ENCODE measurements at regions of chr15 and their contacts with region 1.

Region 1: GRCh38 chr15:70466895-70467529 is 296.3 kb downstream of the UACA start:
- DNase-seq: peak; percentile 71
- H3K4me3 Mint-ChIP-seq: no peak overlapping the region
- H3K27ac Mint-ChIP-seq: no peak overlapping the region
- H3K4me1 Mint-ChIP-seq: peaks cover 4% of the 10 kb centered on the region
- H3K27me3 Mint-ChIP-seq: no peaks in the 10 kb centered on the region

Region 2: GRCh38 chr15:69523010-69524001 is 943.7 kb before region 1 on chr15:
- CTCF ChIA-PET with region 1: no interaction called
- intact Hi-C with region 1: loop called (anchors 5 kb)
- DNase-seq: peak; percentile 86
- H3K4me3 Mint-ChIP-seq: no peak overlapping the region
- H3K27ac Mint-ChIP-seq: no peak overlapping the region
- H3K4me1 Mint-ChIP-seq: no peaks in the 10 kb centered on the region
- H3K27me3 Mint-ChIP-seq: peaks cover 2% of the 10 kb centered on the region

Region 3: DNA sequence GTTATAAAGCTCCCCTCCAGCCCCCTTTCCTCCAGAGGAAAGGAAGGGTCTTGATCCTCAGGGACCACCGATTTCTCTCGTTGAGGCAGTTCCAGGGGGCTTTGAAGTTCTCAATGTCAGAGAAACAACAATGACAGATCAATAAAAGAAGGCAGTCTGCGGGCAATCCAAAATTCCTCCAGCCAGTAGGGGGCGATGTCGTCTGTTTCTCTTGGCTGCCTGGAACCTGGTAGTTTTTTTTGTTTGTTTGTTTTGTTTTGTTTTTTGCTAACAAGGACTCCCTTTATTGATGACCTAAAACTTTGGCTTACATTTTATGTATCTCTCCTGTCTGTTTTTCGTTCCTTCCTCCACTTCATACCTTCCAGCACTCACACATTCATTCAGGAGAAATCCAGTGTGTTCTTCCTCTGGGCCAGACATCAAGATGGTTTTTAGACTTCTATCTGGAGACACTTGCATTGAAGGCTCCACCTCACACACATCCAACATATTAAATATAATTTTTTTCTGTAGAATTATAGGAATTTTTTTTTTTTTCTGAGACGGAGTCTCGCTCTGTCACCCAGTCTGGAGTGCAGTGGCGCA is 737.8 kb before region 1 on chr15:
- CTCF ChIA-PET with region 1: no interaction called
- intact Hi-C with region 1: loop called (anchors 5 kb)
- DNase-seq: peak; percentile 88
- H3K4me3 Mint-ChIP-seq: no peak overlapping the region
- H3K27ac Mint-ChIP-seq: no peak overlapping the region
- H3K4me1 Mint-ChIP-seq: peaks cover 21% of the 10 kb centered on the region
- H3K27me3 Mint-ChIP-seq: no peaks in the 10 kb centered on the region

Region 4: DNA sequence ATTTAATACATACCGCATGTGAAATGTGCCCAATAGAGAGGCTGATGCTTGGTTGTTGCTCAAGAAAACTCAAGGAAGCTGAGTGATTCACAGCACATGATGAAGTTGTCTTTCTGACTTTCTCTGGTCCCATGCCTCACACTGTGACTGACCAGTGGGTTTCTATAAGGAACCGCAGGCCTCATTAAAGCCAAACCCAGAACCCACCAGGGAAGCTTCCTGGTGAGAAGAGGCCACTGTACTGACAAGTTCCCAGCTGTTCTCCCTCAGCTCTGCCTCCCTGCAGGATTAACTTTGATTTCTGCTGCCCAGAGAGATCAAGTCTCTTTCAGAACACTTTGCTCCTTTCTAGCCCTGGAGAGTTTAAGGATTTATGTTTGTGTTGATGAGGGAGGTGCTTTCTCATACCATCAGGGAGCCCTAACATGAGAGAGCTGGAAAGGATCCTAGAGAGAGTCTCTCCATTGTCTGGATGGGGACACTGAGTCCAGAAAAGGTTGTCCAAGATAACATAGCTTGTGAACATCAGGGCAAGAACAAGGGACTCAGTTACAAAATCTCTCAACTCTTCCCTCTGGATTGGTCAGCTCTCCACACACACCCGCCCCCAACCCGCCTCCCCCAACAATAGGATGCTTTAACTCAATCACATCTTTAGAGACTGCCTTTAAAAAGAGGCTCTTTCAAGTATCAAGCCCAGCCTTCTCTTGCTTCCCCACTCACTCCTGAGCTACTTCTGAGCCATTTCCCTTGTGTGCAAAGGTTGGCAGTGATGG is 66.1 kb before region 1 on chr15:
- CTCF ChIA-PET with region 1: no interaction called
- intact Hi-C with region 1: no loop called
- DNase-seq: no peak
- H3K4me3 Mint-ChIP-seq: no peak overlapping the region
- H3K27ac Mint-ChIP-seq: no peak overlapping the region
- H3K4me1 Mint-ChIP-seq: no peaks in the 10 kb centered on the region
- H3K27me3 Mint-ChIP-seq: no peaks in the 10 kb centered on the region

Region 5: DNA sequence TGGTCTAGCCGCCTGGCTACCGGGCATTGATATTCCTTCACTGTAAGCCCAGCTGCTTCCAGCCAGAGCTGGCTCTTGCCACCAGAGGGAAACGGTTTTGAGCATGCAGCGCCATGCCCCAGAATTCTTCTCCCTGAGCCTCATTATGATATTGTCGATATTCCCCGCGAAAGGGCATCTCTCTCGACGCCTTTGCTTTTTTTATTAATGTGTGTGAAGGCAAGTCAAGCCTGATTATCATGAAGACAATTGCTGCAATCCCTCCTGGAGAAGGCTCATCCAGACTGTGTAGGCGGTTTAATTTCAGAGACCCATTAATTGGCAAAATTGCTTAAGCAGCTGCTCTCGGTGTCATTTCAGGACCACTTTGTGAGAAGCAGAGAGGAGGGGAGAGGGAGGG is 48.1 kb before region 1 on chr15:
- CTCF ChIA-PET with region 1: no interaction called
- intact Hi-C with region 1: no loop called
- DNase-seq: no peak
- H3K4me3 Mint-ChIP-seq: no peak overlapping the region
- H3K27ac Mint-ChIP-seq: no peak overlapping the region
- H3K4me1 Mint-ChIP-seq: no peaks in the 10 kb centered on the region
- H3K27me3 Mint-ChIP-seq: no peaks in the 10 kb centered on the region

Region 6: DNA sequence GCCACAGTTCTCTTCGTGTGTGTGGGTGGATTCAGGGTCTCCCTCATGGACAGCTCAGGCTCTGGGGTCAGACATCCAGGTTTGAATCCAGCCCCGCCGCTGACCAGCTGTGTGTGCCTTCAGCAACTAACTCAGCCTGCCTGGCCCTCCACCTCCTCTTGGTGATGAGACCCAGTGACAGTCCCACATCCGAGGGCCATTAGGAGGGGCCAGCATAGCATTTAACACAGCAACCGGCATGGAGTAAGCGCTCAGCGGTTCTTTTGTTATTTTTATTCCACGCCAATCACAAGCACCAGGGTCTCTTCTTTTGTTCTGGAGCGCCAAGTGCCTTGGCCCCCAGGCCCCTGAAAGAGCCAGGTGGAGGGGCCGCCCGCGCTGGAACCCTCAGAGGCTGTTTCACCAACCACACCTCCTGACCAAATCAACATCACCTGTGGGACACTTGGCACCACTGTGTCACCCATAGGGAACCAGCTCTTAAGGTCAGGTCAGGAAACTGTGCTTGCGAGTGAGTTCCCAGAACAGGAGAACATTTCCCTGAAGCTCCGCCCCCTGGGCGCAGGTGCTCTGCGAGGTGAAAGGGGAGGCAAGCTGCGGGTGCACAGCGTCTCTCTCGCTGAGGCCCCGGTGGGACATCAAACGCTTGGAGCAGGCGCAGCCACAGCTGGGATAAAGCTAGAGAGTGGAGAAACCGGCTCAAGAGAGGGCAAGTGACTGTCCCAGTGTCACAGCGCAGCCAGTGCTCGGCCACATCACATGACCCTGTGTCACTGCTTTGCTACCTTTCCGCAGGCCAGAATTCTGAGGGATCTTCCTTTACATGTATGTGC is 15.0 kb before region 1 on chr15:
- CTCF ChIA-PET with region 1: interaction called, 11 read pairs
- intact Hi-C with region 1: no loop called
- DNase-seq: peak; percentile 78
- H3K4me3 Mint-ChIP-seq: peak overlapping the region; percentile 9
- H3K27ac Mint-ChIP-seq: peak overlapping the region; percentile 50
- H3K4me1 Mint-ChIP-seq: peaks cover 34% of the 10 kb centered on the region
- H3K27me3 Mint-ChIP-seq: no peaks in the 10 kb centered on the region